CD4-positive, alpha-beta T cell (primary cell): ENCODE measurements at regions of chr10 and their contacts with region 1.

Region 1: GRCh38 chr10:35341521-35341920 is 5.2 kb downstream of the CCNY start:
- DNase-seq: peak in 3 of 14 experiments; percentile 51 to 66 (median 54)
- ATAC-seq: peak; percentile 71
- H3K4me3 ChIP-seq: no peak overlapping the region
- H3K4me3 Mint-ChIP-seq: peak overlapping the region; percentile 22
- H3K27ac ChIP-seq: peak overlapping the region; percentile 5 to 41
- H3K27ac Mint-ChIP-seq: peak overlapping the region; percentile 15
- H3K4me1 ChIP-seq: peaks cover 44% of the 10 kb centered on the region
- H3K4me1 Mint-ChIP-seq: peaks cover 73% of the 10 kb centered on the region
- H3K27me3 ChIP-seq: no peaks in the 10 kb centered on the region
- H3K27me3 Mint-ChIP-seq: no peaks in the 10 kb centered on the region
- CTCF ChIP-seq: no peak

Region 2: DNA sequence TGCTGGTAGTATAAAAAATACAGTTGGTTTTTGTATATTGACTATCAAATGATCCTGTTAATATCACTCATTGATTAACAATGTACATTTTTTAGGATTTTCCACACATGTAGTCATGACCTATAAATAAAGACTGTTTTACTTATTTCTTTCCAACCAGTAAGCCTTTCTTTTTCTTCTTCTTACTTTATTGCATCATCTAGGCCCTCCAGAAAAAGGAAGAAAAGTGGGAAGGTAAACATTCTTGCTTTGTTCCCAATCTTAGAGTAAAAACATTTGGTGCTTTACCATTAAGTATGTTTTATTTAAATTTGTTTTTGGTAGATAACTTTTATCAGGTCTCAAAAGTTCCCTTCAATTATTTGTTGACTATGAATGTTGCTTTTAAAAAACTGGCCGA is 52.3 kb before region 1 on chr10:
- CTCF ChIA-PET with region 1: no interaction called
- POLR2A ChIA-PET with region 1: no interaction called
- intact Hi-C with region 1: no loop called
- DNase-seq: no peak
- ATAC-seq: no peak
- H3K4me3 ChIP-seq: no peak overlapping the region
- H3K4me3 Mint-ChIP-seq: no peak overlapping the region
- H3K27ac ChIP-seq: no peak overlapping the region
- H3K27ac Mint-ChIP-seq: no peak overlapping the region
- H3K4me1 ChIP-seq: no peaks in the 10 kb centered on the region
- H3K4me1 Mint-ChIP-seq: no peaks in the 10 kb centered on the region
- H3K27me3 ChIP-seq: no peaks in the 10 kb centered on the region
- H3K27me3 Mint-ChIP-seq: peaks cover 4% of the 10 kb centered on the region
- CTCF ChIP-seq: no peak

Region 3: GRCh38 chr10:35352512-35352911 is 11.0 kb after region 1 on chr10:
- CTCF ChIA-PET with region 1: no interaction called
- POLR2A ChIA-PET with region 1: interaction called, 12 read pairs
- intact Hi-C with region 1: no loop called
- DNase-seq: peak in 2 of 14 experiments; percentile 22 to 62
- ATAC-seq: peak; percentile 51
- H3K4me3 ChIP-seq: no peak overlapping the region
- H3K4me3 Mint-ChIP-seq: peak overlapping the region; percentile 9
- H3K27ac ChIP-seq: no peak overlapping the region
- H3K27ac Mint-ChIP-seq: no peak overlapping the region
- H3K4me1 ChIP-seq: peaks cover 58% of the 10 kb centered on the region
- H3K4me1 Mint-ChIP-seq: peaks cover 96% of the 10 kb centered on the region
- H3K27me3 ChIP-seq: no peaks in the 10 kb centered on the region
- H3K27me3 Mint-ChIP-seq: no peaks in the 10 kb centered on the region
- CTCF ChIP-seq: no peak